CD8-positive, alpha-beta T cell (primary cell): ENCODE measurements at regions of chr14 and their contacts with region 1.

Region 1: GRCh38 chr14:61296719-61297502 is 15.8 kb upstream of the TMEM30B start:
- DNase-seq: peak in 2 of 9 experiments; percentile 69 to 79
- ATAC-seq: peak; percentile 73
- H3K4me3 ChIP-seq: no peak overlapping the region
- H3K4me3 Mint-ChIP-seq: no peak overlapping the region
- H3K27ac ChIP-seq: peak overlapping the region in 1 of 2 experiments; percentile 40
- H3K27ac Mint-ChIP-seq: peak overlapping the region; percentile 78
- H3K4me1 ChIP-seq: peaks cover 39% of the 10 kb centered on the region
- H3K4me1 Mint-ChIP-seq: peaks cover 54% of the 10 kb centered on the region
- H3K27me3 ChIP-seq: no peaks in the 10 kb centered on the region
- H3K27me3 Mint-ChIP-seq: no peaks in the 10 kb centered on the region
- CTCF ChIP-seq: peak; percentile 89

Region 2: GRCh38 chr14:61342486-61342885 is 45.6 kb after region 1 on chr14:
- CTCF ChIA-PET with region 1: interaction called, 14 read pairs
- POLR2A ChIA-PET with region 1: interaction called, 6 read pairs
- intact Hi-C with region 1: no loop called
- DNase-seq: peak; percentile 60 to 94 (median 85)
- ATAC-seq: peak; percentile 49
- H3K4me3 ChIP-seq: peak overlapping the region in 1 of 2 experiments; percentile 25
- H3K4me3 Mint-ChIP-seq: peak overlapping the region; percentile 77
- H3K27ac ChIP-seq: peak overlapping the region; percentile 39 to 77
- H3K27ac Mint-ChIP-seq: peak overlapping the region; percentile 99
- H3K4me1 ChIP-seq: peaks cover 94% of the 10 kb centered on the region
- H3K4me1 Mint-ChIP-seq: peaks cover 95% of the 10 kb centered on the region
- H3K27me3 ChIP-seq: no peaks in the 10 kb centered on the region
- H3K27me3 Mint-ChIP-seq: no peaks in the 10 kb centered on the region
- CTCF ChIP-seq: no peak

Region 3: DNA sequence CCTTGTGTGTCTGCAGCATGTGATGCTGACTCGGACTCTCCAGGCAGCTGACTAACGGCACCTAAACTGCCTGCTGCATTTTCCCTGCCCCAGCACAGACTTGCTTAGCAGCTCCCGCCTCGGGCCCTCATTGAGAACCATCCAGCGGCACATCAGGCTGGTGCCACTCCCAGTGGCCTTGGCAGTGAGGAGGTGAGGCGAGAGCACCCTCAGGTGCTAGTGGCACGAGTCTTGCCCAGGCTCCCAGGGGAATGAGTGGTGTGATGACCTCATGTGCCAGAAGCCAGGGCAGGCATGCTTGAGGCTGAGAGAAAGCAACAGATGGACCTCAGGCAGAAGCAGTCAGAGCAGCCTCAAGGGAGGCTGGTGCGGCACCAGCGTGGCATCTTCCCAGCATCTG is 84.6 kb after region 1 on chr14:
- CTCF ChIA-PET with region 1: no interaction called
- POLR2A ChIA-PET with region 1: no interaction called
- intact Hi-C with region 1: loop called in 1 of 2 experiments (anchors 5 kb)
- DNase-seq: peak in 1 of 9 experiments; percentile 45
- ATAC-seq: no peak
- H3K4me3 ChIP-seq: peak overlapping the region in 1 of 2 experiments; percentile 6
- H3K4me3 Mint-ChIP-seq: peak overlapping the region; percentile 59
- H3K27ac ChIP-seq: peak overlapping the region in 1 of 2 experiments; percentile 90
- H3K27ac Mint-ChIP-seq: no peak overlapping the region
- H3K4me1 ChIP-seq: peaks cover 100% of the 10 kb centered on the region
- H3K4me1 Mint-ChIP-seq: no peaks in the 10 kb centered on the region
- H3K27me3 ChIP-seq: no peaks in the 10 kb centered on the region
- H3K27me3 Mint-ChIP-seq: no peaks in the 10 kb centered on the region
- CTCF ChIP-seq: no peak

Region 4: GRCh38 chr14:61516964-61517653 is 220.2 kb after region 1 on chr14:
- CTCF ChIA-PET with region 1: no interaction called
- POLR2A ChIA-PET with region 1: no interaction called
- intact Hi-C with region 1: no loop called
- DNase-seq: no peak
- ATAC-seq: no peak
- H3K4me3 ChIP-seq: no peak overlapping the region
- H3K4me3 Mint-ChIP-seq: no peak overlapping the region
- H3K27ac ChIP-seq: peak overlapping the region in 1 of 2 experiments; percentile 41
- H3K27ac Mint-ChIP-seq: peak overlapping the region; percentile 53
- H3K4me1 ChIP-seq: peaks cover 56% of the 10 kb centered on the region
- H3K4me1 Mint-ChIP-seq: peaks cover 82% of the 10 kb centered on the region
- H3K27me3 ChIP-seq: no peaks in the 10 kb centered on the region
- H3K27me3 Mint-ChIP-seq: no peaks in the 10 kb centered on the region
- CTCF ChIP-seq: no peak

Region 5: GRCh38 chr14:61537563-61538463 is 240.9 kb after region 1 on chr14:
- CTCF ChIA-PET with region 1: interaction called, 3 read pairs
- POLR2A ChIA-PET with region 1: no interaction called
- intact Hi-C with region 1: loop called in 1 of 2 experiments (anchors 10 kb)
- DNase-seq: peak in 4 of 9 experiments; percentile 31 to 46 (median 40)
- ATAC-seq: peak; percentile 48
- H3K4me3 ChIP-seq: no peak overlapping the region
- H3K4me3 Mint-ChIP-seq: no peak overlapping the region
- H3K27ac ChIP-seq: peak overlapping the region in 1 of 2 experiments; percentile 44
- H3K27ac Mint-ChIP-seq: peak overlapping the region; percentile 87
- H3K4me1 ChIP-seq: no peaks in the 10 kb centered on the region
- H3K4me1 Mint-ChIP-seq: peaks cover 51% of the 10 kb centered on the region
- H3K27me3 ChIP-seq: no peaks in the 10 kb centered on the region
- H3K27me3 Mint-ChIP-seq: no peaks in the 10 kb centered on the region
- CTCF ChIP-seq: no peak

Region 6: DNA sequence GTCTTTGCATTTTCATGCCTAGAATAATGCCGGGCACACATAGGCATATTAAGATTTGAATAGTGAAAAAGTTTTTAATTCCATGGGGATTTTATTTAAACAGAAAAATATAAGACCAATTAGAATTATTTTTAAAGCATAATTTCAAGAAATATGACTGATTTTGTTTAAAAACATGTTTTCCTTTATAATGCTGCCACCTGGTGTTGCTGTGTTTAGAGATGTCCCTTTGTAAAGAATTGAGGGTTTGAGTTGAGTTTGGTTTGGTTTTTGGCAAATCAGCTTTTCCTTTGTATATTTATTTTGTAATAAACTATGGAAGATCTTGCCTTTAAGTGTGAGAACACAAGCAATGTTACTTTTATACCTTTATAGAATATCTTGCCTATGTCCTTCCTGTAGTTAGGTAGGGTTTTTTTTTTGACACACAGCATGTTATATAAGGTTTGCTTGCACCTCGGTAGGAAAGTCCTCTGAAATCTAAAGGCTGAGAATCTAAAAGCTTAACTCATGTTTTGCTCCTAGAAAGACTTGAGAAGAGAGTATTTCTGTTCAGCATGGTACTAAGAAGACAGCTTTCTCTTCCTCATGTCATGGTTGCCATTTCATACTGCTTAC is 434.0 kb after region 1 on chr14:
- CTCF ChIA-PET with region 1: interaction called, 3 read pairs
- POLR2A ChIA-PET with region 1: no interaction called
- intact Hi-C with region 1: loop called (anchors 2 kb)
- DNase-seq: peak in 3 of 9 experiments; percentile 19 to 58 (median 51)
- ATAC-seq: no peak
- H3K4me3 ChIP-seq: no peak overlapping the region
- H3K4me3 Mint-ChIP-seq: no peak overlapping the region
- H3K27ac ChIP-seq: no peak overlapping the region
- H3K27ac Mint-ChIP-seq: peak overlapping the region; percentile 42
- H3K4me1 ChIP-seq: peaks cover 3% of the 10 kb centered on the region
- H3K4me1 Mint-ChIP-seq: peaks cover 20% of the 10 kb centered on the region
- H3K27me3 ChIP-seq: no peaks in the 10 kb centered on the region
- H3K27me3 Mint-ChIP-seq: no peaks in the 10 kb centered on the region
- CTCF ChIP-seq: peak; percentile 73